Activated CD4-positive, alpha-beta T cell treated with anti-CD3 and anti-CD28 coated beads, Interleukin-2, amount 10 ng/mL, durations not matched to agents 24 days and 14 days (primary cell): ENCODE measurements at regions of chr16 and their contacts with region 1.

Region 1: DNA sequence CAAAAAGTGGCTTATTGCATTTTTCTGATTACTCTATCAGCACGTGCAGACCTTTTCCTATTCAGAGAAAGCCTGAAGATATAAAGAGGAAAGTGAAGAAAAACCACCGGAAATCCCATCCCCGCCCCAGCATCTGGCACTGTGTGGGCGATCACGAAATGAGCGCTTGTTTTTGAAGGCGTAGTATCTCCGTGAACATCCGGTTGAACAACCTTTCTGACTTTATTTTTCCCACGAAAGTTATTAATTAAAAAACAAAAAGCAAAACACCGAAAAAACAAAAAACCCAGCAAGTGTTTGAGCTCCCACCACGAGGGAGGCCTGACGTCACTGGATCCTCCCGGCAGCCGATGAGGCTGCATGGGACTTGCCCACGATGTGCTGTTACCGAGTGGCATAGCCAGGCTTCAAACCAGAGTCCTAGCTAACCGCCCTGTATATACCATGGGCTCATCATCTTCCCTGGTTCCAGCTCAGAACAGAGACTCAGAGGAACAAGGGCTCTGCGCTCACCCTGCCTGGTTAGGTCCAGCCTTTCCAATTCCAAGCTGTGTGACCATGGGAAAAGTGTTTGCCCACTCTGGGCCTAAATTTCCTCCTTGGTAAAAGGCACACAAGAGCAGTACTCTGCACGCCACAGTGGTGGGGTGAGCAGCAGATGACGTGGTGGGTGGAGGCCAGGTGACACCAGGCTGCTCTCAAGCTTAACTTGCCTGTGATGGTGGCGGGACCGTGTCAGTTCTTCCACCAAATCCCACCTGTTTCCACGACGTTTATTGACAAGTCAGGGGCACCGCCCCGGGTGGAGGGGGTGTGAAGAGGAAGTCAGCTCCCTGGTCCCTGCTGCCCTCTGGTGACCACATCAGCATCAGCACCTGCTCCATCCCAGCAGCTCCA is 34.3 kb upstream of the IL21R start:
- DNase-seq: peak; percentile 94
- H3K4me3 Mint-ChIP-seq: peak overlapping the region; percentile 69
- H3K27ac Mint-ChIP-seq: peak overlapping the region; percentile 99
- H3K4me1 Mint-ChIP-seq: peaks cover 52% of the 10 kb centered on the region
- H3K27me3 Mint-ChIP-seq: no peaks in the 10 kb centered on the region

Region 2: DNA sequence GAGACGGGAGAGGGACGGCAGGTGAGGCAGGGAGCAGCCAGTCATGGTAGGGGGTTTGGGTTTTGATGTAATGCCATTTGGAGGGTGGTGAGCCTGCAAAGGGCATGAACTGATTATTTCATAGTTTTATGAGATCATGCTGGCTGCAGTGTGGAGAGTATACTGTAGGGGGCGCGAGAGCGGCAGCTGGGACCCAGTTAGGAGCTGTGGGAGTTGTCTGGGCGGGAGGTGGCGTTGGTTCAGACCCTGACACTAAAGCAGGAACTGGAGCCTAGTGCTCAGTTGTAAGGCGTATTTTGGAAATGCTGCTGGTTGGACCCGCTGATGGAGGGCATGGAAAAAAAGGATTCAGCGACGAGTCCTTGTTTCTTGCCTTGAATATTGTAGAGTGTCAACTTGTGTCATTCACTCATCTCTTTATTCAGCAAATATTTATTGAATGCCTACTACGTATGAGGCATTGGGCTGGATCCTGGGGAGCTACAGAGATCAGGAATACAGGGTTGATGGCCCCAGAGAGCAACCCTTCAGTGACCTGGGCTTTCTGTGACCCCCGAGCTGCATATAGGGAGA is 188.1 kb before region 1 on chr16:
- intact Hi-C with region 1: loop called (anchors 1 kb)
- DNase-seq: peak; percentile 96
- H3K4me3 Mint-ChIP-seq: peak overlapping the region; percentile 3
- H3K27ac Mint-ChIP-seq: peak overlapping the region; percentile 73
- H3K4me1 Mint-ChIP-seq: peaks cover 38% of the 10 kb centered on the region
- H3K27me3 Mint-ChIP-seq: peaks cover 3% of the 10 kb centered on the region

Region 3: DNA sequence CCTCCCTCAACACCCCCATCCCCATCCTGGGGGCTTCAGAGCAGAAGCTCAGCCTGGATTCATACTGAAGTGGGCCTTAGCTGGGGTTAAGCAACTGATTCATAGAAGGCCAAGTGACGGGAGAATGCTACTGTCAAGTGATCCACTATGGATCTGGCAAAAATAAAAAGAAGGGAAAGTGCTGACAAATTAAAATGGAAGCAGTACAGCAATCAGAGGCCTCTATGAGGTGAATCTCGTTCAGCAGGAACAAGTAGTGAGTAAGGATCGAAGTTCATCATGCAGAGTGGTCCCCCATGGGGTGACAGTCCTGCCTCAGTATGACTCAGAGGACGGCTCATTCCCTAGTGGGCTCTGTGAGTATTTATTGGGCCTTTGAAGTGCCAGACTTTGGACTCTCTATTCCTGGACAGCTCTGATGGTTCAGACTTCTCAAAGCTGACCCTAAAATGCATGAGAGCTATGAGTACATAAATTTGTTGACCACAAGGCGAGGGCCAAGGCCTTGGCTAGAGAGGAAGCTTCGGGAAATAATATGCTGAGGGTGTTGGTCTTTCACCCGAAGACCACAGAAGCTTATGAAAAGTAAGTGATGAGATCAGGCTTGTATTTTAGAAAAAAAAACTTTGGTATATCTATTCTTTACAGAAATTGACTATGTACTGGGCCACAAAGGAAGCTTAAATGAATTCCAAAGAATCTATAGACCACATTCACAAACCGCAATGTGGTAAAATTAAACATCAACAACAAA is 93.9 kb before region 1 on chr16:
- intact Hi-C with region 1: loop called (anchors 2 kb)
- DNase-seq: peak; percentile 83
- H3K4me3 Mint-ChIP-seq: peak overlapping the region; percentile 68
- H3K27ac Mint-ChIP-seq: peak overlapping the region; percentile 94
- H3K4me1 Mint-ChIP-seq: peaks cover 59% of the 10 kb centered on the region
- H3K27me3 Mint-ChIP-seq: no peaks in the 10 kb centered on the region

Region 4: DNA sequence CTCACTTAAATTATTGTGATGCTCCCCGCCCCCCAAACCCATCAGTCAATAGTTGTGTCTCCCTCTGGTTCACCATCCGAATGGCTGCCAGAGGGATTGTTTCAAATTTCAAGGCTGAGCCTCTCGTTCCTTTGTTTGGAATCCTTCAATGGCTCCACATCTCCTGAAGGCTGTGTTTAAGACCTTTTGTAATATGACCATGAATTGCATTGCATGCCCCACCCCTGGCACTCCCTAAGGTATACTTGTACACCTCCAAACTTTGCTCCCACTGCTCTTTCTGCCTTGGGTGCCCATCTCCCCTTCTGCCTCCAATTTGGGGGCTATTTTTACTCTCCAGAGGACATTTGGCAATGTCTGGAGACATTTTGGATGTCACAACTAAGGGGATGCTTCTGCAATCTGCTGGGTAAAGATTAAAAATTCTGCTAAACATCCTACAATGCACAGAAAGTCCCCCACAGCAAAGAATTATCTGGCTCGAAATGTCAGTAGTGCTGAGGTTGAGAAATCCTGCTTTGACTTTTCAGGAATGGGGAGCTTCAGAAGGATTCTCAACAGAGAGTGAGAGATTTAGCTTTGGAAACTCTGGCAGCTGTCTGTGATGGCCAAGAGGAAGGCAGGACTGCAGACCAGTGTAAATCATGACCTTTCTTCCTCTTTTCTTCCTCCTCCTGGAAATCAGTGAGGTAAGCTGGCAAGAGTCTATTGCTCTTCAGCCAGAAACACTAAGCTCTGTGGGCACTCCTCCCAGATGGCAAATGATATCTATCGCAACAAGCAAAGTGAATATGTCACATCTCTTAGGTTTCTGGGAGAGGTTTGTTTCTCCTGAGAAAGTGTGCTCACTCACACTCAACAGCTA is 62.6 kb before region 1 on chr16:
- intact Hi-C with region 1: no loop called
- DNase-seq: no peak
- H3K4me3 Mint-ChIP-seq: no peak overlapping the region
- H3K27ac Mint-ChIP-seq: no peak overlapping the region
- H3K4me1 Mint-ChIP-seq: peaks cover 20% of the 10 kb centered on the region
- H3K27me3 Mint-ChIP-seq: no peaks in the 10 kb centered on the region

Region 5: GRCh38 chr16:27318392-27319226 is 49.1 kb before region 1 on chr16:
- intact Hi-C with region 1: loop called (anchors 1 kb)
- DNase-seq: peak; percentile 89
- H3K4me3 Mint-ChIP-seq: peak overlapping the region; percentile 100
- H3K27ac Mint-ChIP-seq: peak overlapping the region; percentile 96
- H3K4me1 Mint-ChIP-seq: peaks cover 62% of the 10 kb centered on the region
- H3K27me3 Mint-ChIP-seq: no peaks in the 10 kb centered on the region

Region 6: DNA sequence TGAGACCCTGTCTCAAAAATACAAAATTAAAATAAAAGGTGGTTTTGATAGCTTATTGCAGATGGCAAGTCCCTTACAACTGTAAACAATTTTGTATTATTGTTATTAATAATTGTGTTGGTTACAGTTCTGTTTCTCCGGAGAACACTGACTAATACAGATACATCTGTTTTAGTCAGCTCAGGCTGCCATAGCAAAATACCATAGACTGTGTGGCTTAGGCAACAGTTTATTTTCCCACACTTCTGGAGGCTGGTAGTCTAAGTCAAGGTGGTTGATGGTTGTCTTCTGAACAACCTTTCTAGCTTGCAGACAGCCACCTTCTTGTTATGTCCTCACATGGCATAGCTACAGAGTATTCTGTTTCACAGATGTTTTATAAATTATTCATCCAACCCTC is 20.0 kb after region 1 on chr16:
- intact Hi-C with region 1: no loop called
- DNase-seq: peak; percentile 58
- H3K4me3 Mint-ChIP-seq: no peak overlapping the region
- H3K27ac Mint-ChIP-seq: peak overlapping the region; percentile 76
- H3K4me1 Mint-ChIP-seq: peaks cover 14% of the 10 kb centered on the region
- H3K27me3 Mint-ChIP-seq: no peaks in the 10 kb centered on the region

Region 7: GRCh38 chr16:27401768-27402568 is 34.3 kb after region 1 on chr16 and contains the start of gene IL21R:
- intact Hi-C with region 1: loop called (anchors 1 kb)
- DNase-seq: peak; percentile 94
- H3K4me3 Mint-ChIP-seq: peak within 1 kb of the TSS; percentile 100
- H3K27ac Mint-ChIP-seq: peak within 1 kb of the TSS; percentile 97
- H3K4me1 Mint-ChIP-seq: peaks cover 47% of the 10 kb centered on the region
- H3K27me3 Mint-ChIP-seq: no peaks in the 10 kb centered on the region
- total RNA-seq, gene IL21R: 94.9 and 100 TPM in 2 replicates

Region 8: DNA sequence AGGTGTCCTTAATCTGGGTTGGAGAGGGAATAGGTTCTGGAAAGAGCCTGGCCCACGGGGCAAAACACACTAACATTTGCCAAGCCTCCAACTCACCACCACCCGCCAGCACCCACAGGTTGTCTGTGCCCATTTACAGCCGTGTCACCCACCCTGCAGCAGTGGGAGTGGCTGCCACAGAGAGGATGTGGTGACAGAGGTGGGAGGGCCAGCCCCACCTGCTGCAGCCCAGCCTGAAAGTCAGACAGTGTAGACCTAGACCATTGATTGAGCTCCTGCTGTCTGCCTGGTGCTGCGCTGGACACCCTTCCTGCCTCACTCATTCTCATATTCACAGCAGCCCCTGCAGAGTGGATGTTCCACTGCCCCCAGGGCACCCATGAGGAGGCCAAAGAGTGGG is 79.0 kb after region 1 on chr16:
- intact Hi-C with region 1: loop called (anchors 2 kb)
- DNase-seq: peak; percentile 88
- H3K4me3 Mint-ChIP-seq: peak overlapping the region; percentile 45
- H3K27ac Mint-ChIP-seq: peak overlapping the region; percentile 78
- H3K4me1 Mint-ChIP-seq: peaks cover 46% of the 10 kb centered on the region
- H3K27me3 Mint-ChIP-seq: no peaks in the 10 kb centered on the region

Region 9: DNA sequence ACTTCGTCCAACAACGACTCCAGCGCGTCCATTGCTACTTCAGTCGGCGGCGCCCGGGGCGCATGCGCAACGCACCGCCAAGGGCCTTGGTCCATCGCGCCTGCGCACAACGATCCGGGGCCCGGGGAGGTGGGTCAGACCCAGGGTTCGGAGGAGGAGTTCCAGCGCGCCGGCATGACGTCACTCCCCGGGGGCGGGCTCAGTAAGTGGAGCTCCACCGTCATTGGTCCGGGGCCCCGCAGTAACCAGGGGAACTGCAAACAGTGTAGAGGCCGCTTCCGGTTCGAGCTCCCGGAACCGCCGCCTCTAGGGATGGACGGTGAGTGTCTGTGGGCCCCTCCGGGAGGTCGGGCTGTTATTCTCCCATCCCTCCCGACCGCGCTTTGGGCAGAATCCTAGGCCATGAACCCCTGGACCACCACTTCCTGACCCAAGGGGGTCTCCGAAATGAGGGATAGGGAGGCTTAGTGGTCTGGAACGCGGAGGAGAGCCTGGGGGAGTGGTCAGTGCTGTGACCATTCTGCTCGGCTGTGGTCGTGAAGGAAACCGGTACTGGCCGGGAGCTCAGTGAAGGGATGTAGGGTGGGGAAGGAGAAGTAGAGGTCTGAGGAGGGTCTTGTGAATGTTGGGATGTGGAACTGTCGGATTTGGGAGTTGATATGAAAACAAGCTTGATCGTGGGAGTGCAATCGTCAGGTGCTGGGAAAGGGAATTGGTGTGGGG is 182.3 kb after region 1 on chr16 and contains the starts of genes GTF3C1 and KATNIP:
- intact Hi-C with region 1: no loop called
- DNase-seq: peak; percentile 100
- H3K4me3 Mint-ChIP-seq: peak within 1 kb of the TSS; percentile 92
- H3K27ac Mint-ChIP-seq: peak within 1 kb of the TSS; percentile 89
- H3K4me1 Mint-ChIP-seq: peaks cover 35% of the 10 kb centered on the region
- H3K27me3 Mint-ChIP-seq: peaks cover 1% of the 10 kb centered on the region
- total RNA-seq, gene GTF3C1: 54.3 and 56.5 TPM in 2 replicates
- total RNA-seq, gene KATNIP: 17.5 and 18.0 TPM in 2 replicates